ENCODE measurements at regions of chr9 and their contacts with region 1.

Region 1: DNA sequence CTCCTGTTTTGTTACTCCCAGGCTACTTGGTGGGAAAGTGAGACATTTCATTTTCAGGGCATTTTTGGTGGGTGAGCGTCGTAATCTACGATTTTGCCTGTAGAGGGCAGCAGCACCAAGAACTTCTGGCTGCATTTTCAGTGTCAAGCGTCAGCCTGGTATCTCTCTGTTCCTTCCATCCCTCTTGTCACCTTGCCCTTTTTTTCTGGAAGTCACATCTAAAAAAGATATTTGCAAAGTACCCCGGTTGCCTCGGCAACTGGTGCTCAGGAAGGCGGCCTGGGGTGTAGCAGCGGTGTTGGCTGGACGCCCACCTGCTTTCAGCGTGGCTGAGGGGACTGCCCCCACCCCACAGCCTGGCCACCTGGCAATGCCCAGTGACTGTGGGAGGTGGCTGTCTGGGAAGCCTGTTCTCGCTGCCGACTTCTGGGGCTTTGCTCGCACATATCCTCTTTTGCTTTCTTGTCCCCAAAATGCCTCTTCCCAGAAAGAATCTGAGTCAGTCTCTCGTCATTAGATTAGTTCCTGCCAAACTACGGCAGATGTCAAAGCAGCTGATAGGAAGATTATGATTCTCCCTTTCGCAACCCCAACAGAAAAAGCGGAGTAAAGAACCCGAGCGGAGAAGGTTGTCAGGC is 84.5 kb downstream of the ACER2 start:
- DNase-seq: peak; percentile 78
- ATAC-seq: peak; percentile 94
- H3K4me3 ChIP-seq: peak overlapping the region; percentile 31
- H3K27ac ChIP-seq: no peak overlapping the region
- H3K4me1 ChIP-seq: no peaks in the 10 kb centered on the region
- H3K27me3 ChIP-seq: peaks cover 21% of the 10 kb centered on the region
- CTCF ChIP-seq: peak; percentile 80
- POLR2A ChIP-seq: no peak
- RAD21 ChIP-seq: peak; percentile 63

Region 2: GRCh38 chr9:19424176-19424779 is 69.0 kb before region 1 on chr9:
- CTCF ChIA-PET with region 1: no interaction called
- POLR2A ChIA-PET with region 1: no interaction called
- dilution Hi-C with region 1: no loop called
- in situ Hi-C with region 1: no loop called
- intact Hi-C with region 1: no loop called
- DNase-seq: no peak
- ATAC-seq: peak; percentile 65
- H3K4me3 ChIP-seq: no peak overlapping the region
- H3K27ac ChIP-seq: no peak overlapping the region
- H3K4me1 ChIP-seq: no peaks in the 10 kb centered on the region; the same call in 1 of the 2 replicates
- H3K27me3 ChIP-seq: no peaks in the 10 kb centered on the region
- CTCF ChIP-seq: no peak
- POLR2A ChIP-seq: no peak
- RAD21 ChIP-seq: no peak

Region 3: DNA sequence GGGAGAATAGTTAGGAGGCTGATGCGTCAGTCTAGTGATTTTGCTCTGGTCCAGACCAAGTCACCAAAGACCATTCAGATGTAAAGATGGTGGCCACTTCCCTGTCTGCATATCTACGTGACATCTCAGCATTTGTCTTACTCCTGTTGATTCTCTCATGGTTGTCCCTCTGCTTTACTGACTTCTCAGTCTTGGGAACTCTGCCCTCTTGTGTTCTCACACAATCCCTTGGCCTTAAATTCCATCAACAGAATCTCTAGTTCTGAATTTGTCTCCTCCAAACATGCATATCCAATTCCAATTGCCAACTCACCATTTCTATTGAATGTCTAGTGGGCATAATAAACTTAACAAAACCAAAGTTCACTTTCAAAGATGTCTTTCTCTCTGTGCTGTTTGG is 147.8 kb after region 1 on chr9:
- CTCF ChIA-PET with region 1: no interaction called
- POLR2A ChIA-PET with region 1: no interaction called
- dilution Hi-C with region 1: no loop called
- in situ Hi-C with region 1: no loop called
- intact Hi-C with region 1: loop called (anchors 5 kb)
- DNase-seq: no peak
- ATAC-seq: no peak
- H3K4me3 ChIP-seq: no peak overlapping the region
- H3K27ac ChIP-seq: no peak overlapping the region
- H3K4me1 ChIP-seq: no peaks in the 10 kb centered on the region
- H3K27me3 ChIP-seq: no peaks in the 10 kb centered on the region
- CTCF ChIP-seq: no peak
- POLR2A ChIP-seq: no peak
- RAD21 ChIP-seq: no peak

Measured in IMR-90 (cell line).